ENCODE measurements at regions of chr15 and their contacts with region 1.

Region 1: DNA sequence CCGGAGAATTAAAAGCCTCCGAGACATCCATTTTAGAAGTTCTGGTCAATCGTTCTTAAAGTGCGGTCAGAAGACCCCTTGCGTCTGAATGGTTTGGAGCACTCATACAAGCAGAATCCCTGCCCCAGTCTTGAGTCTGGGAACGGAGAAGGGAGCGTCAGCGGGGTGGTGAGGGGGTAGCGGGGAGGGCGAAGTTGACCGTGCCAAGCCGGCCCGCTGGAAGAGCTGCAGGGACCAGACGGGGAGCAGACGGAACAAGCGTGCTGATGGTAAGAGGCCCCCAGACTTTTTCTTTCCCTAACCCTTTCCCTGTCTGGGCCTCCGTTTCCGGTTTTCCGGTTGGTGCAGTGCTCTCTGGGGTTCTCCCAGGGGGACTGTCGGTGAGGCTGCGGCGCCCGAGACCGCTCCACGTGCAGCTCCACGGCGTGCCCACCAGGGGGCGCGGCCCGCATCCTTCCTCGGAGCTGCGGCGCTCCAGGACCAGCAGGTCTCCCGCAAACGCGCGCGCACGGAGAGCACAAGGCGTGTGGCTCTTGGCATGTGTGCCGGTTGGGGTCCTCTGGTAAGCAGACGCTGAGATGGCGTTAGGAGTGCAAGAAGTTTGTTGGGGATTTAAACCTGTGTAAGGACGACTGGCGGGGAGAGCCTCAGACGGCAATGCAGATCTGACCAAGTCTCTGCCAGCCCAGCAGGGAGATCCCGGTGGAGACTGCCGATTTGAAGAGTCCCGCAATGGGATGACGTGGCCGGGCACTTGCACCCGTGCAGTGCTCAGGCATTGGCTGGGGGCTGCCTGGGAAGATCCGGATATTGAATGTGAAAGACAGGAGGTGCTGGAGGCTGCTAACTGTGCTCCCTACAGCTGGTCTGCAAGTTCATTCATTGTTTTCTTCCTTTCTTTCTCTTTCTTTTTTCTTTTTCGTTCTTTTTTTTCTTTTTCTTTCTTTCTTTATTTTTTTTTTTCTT is 19.2 kb upstream of the CORO2B start:
- DNase-seq: no peak
- H3K4me3 ChIP-seq: peak overlapping the region; percentile 59
- CTCF ChIP-seq: peak; percentile 98

Region 2: DNA sequence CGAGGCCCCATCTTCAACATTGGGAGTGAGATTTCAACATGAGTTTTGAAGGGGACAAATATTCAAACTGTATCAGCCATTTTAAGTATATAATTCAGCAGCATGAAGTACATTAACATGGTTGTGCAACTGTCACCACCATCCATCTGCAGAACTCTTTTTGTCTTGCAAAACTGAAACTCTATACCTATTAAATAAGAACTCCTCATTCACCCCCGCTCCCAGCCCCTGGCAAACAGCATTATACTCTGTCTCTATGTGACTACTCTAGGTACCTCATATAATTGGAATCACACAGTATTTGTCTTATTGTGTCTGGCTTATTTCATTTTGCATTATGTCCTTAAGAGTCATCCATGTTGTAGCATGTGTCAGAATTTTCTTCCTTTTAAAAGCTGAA is 907.0 kb before region 1 on chr15:
- CTCF ChIA-PET with region 1: no interaction called
- POLR2A ChIA-PET with region 1: no interaction called
- DNase-seq: no peak
- H3K4me3 ChIP-seq: no peak overlapping the region
- CTCF ChIP-seq: no peak

Region 3: GRCh38 chr15:68277603-68278344 is 281.9 kb before region 1 on chr15 and contains the start of gene FEM1B:
- CTCF ChIA-PET with region 1: no interaction called
- POLR2A ChIA-PET with region 1: no interaction called
- DNase-seq: peak; percentile 56
- H3K4me3 ChIP-seq: peak within 1 kb of the TSS; percentile 99
- CTCF ChIP-seq: no peak

Region 4: DNA sequence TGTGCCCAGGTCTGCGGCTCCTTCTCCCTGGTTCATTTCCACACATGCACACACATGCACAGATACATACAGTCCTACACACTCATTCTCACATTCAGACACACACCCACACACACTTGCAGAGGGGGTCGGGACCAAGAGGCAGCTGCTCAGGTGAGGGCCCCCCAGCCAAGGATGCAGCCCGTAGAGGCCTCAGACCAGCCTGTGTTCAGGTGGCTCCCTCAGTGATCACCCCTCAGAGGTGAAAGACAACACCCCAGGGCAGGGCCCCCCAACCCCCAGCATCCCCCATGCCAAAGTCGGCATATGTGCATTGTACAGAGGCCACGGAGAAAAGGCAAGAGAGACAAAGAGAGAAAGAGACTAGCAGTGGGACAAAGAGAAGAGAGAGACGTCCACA is 13.3 kb after region 1 on chr15:
- CTCF ChIA-PET with region 1: interaction called, 143 read pairs
- POLR2A ChIA-PET with region 1: no interaction called
- DNase-seq: no peak
- H3K4me3 ChIP-seq: no peak overlapping the region
- CTCF ChIP-seq: no peak

Region 5: DNA sequence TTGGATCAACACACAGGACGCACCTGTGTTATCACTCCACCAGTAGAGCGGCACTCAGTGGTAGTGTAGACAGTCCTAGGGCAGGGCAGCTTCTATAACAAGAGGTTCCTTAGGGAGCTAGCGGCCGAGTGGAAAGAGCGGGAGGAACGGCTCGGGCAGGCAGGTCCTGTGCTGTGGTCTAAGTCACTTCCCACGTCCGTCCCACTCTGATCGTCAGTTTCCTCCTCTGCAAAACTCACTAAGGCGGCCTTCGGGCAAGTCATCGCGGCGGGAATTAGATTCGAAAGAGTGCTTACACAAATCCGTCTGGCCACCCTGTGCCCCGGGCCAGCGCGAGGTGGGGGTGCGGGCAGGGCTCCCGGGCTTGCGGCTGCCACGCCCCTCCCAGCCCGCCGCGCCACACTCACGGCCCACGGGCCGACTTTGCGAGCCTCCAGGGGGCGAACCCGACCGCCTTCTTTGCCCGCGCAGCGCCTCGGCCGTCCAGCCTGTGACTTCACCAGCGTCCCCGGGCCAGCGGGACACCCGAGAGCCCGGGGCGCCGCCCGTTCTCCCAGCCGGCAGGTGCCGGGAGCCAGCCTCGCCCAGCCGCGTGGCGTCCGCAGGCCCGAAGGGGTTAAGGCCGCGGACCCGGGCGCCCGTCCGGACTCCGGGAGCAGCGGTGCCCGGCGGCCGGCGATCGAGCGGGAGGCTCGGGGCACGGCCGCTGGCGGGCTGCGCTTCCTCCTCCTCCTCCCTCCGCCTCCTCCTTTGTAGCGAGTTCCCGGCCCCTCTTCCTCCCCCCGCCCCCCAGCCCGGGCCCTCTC is 18.7 kb after region 1 on chr15:
- CTCF ChIA-PET with region 1: interaction called, 14 read pairs
- POLR2A ChIA-PET with region 1: no interaction called
- DNase-seq: no peak
- H3K4me3 ChIP-seq: peak overlapping the region; percentile 58
- CTCF ChIP-seq: peak; percentile 66

Region 6: DNA sequence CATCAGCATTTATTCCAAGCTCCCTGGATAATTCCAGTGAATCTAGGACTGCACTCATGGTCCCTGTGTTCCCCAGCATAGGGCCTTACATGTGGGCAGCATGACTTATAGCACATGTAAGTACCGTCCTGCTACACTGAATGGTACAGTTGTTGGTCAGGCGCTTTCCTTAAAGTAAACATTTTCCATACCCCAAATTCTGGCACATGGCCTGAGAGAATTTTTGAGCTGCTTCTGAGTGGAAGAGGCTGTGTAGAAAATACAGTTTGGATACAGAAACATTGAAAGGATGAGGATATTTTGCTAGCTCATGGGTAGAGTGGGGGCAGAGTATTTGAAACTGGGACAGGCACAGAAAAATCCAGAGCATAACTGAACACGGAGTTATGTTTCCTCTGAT is 46.7 kb after region 1 on chr15:
- CTCF ChIA-PET with region 1: interaction called, 11 read pairs
- POLR2A ChIA-PET with region 1: no interaction called
- DNase-seq: no peak
- H3K4me3 ChIP-seq: no peak overlapping the region
- CTCF ChIP-seq: no peak

Region 7: DNA sequence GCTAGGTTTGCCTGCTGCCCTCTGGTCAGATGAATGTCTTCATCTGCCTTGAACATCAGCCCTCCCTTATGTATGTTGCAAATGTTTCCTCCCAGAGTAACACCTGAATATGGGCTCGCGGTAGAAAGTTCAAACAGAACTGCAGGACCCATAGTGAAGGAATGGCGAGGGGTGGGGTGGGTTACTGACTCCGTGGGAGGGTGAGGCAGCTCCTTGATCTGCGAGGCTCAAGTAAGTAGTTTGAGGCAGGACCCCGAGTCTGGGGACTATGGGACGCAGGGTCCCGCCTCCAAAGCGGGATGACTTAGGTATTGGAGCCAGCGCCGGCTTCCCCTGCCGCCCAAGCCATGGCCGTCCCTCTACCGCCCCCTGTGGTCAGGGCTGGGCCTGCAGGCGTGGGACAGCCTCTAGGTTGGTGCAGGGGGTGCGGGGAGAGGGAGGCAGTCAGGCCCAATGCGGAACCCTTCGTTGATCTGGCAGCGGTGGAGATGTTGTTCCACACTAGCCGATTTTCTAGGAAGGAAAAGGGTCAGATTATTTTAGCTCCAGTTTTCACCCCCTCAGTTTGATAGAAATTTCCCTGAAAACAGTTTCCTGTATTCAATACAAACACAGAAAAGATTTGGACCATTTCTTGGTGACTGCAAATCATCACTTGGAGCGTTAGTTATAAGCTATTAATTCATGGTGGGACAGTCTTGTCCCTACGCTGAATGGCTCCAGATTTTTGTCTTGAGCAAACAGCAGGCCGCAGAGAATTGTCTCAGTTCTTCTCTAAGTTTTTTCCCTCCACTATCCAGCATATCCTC is 91.5 kb after region 1 on chr15:
- CTCF ChIA-PET with region 1: interaction called, 14 read pairs
- POLR2A ChIA-PET with region 1: no interaction called
- DNase-seq: no peak
- H3K4me3 ChIP-seq: no peak overlapping the region
- CTCF ChIP-seq: peak; percentile 85

Region 8: DNA sequence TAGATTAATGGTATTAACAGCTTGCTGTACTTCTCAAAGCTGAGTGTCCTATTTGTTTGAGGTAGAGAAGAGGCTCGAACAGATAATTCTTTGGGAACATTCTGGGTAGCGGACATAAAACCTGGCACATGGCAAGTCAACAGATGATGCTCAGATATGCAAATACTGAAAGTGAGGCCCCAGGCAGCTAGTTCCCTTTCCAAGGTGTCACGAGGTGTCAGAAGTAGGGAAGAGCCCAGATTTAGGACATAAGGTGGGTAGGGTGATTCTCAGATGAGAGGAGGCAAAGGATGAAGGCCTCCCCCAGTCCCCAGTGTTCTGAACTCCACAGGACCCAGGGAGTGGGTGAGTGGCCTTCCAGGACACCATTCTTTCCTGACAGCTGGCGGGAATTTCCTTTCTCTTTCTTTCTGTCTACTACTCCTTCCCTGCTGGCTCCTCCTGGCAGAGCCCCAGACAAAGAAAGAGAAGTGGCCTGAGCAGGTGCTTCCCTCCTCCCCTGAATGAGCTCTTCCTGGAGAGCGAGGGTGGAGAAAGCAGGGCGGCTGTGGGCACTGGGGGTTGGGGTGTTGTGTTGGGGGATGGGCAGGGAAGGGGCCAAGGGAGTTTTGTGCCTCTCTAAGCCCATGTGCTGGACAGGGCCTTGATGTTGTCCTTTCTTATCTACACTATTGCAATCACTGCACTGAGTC is 106.6 kb after region 1 on chr15:
- CTCF ChIA-PET with region 1: interaction called, 408 read pairs
- POLR2A ChIA-PET with region 1: no interaction called
- DNase-seq: no peak
- H3K4me3 ChIP-seq: no peak overlapping the region
- CTCF ChIP-seq: no peak

Region 9: GRCh38 chr15:68924866-68925560 is 365.4 kb after region 1 on chr15:
- CTCF ChIA-PET with region 1: interaction called, 38 read pairs
- POLR2A ChIA-PET with region 1: no interaction called
- DNase-seq: peak; percentile 10
- H3K4me3 ChIP-seq: no peak overlapping the region
- CTCF ChIP-seq: peak; percentile 88